K562 (cell line): ENCODE measurements at regions of chr4 and their contacts with region 1.

Region 1: GRCh38 chr4:173360587-173361221 is 10.1 kb upstream of the SAP30 start:
- DNase-seq: peak in 1 of 4 experiments; percentile 11
- ATAC-seq: peak; percentile 82
- H3K4me3 ChIP-seq: no peak overlapping the region
- H3K27ac ChIP-seq: no peak overlapping the region
- H3K4me1 ChIP-seq: no peaks in the 10 kb centered on the region
- H3K27me3 ChIP-seq: no peaks in the 10 kb centered on the region
- CTCF ChIP-seq: peak in 2 of 3 experiments; percentile 37 to 49; a peak in 3 of 6 replicates
- EP300 ChIP-seq: no peak
- POLR2A ChIP-seq: no peak
- RAD21 ChIP-seq: peak in 1 of 2 experiments; percentile 37; a peak in 1 of 4 replicates

Region 2: DNA sequence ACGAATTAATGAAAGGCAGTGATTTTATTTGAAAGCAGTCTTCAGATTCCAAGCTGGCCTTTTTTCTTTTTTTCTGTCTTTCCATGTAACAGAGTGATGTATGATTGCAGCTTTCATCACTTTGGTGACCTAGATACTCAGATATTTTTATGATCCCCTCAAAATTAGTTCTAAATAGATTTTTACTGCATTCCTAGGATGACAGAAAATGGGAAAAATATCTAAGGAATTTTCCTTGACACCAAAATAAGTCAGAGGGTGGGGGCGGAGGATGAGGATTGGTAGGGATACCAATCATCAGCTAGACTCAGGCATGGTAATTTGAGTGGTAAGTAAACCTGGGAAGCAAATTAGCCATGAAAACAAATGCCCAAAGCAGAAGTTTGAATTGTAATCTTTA is 14.6 kb before region 1 on chr4:
- CTCF ChIA-PET with region 1: no interaction called
- POLR2A ChIA-PET with region 1: interaction called, 10 read pairs
- in situ Hi-C with region 1: no loop called
- intact Hi-C with region 1: no loop called
- DNase-seq: no peak
- ATAC-seq: no peak
- H3K4me3 ChIP-seq: no peak overlapping the region
- H3K27ac ChIP-seq: no peak overlapping the region
- H3K4me1 ChIP-seq: no peaks in the 10 kb centered on the region
- H3K27me3 ChIP-seq: no peaks in the 10 kb centered on the region
- CTCF ChIP-seq: no peak
- EP300 ChIP-seq: no peak
- POLR2A ChIP-seq: no peak
- RAD21 ChIP-seq: no peak